ENCODE measurements at regions of chr18 and their contacts with region 1.

Region 1: GRCh38 chr18:24791751-24792560 is 331.5 kb downstream of the HRH4 start:
- DNase-seq: no peak
- ATAC-seq: no peak
- H3K4me3 ChIP-seq: no peak overlapping the region
- H3K27ac ChIP-seq: no peak overlapping the region
- H3K4me1 ChIP-seq: no peaks in the 10 kb centered on the region
- H3K27me3 ChIP-seq: no peaks in the 10 kb centered on the region
- CTCF ChIP-seq: no peak
- POLR2A ChIP-seq: no peak

Region 2: GRCh38 chr18:24462838-24463775 is 328.8 kb before region 1 on chr18:
- in situ Hi-C with region 1: no loop called
- intact Hi-C with region 1: no loop called
- DNase-seq: no peak
- ATAC-seq: no peak
- H3K4me3 ChIP-seq: no peak overlapping the region
- H3K27ac ChIP-seq: no peak overlapping the region
- H3K4me1 ChIP-seq: no peaks in the 10 kb centered on the region
- H3K27me3 ChIP-seq: no peaks in the 10 kb centered on the region
- CTCF ChIP-seq: no peak
- POLR2A ChIP-seq: no peak

Region 3: GRCh38 chr18:24488824-24489493 is 303.0 kb before region 1 on chr18:
- in situ Hi-C with region 1: no loop called
- intact Hi-C with region 1: no loop called
- DNase-seq: no peak
- ATAC-seq: peak in 1 of 2 donors; percentile 36
- H3K4me3 ChIP-seq: no peak overlapping the region
- H3K27ac ChIP-seq: no peak overlapping the region
- H3K4me1 ChIP-seq: no peaks in the 10 kb centered on the region
- H3K27me3 ChIP-seq: no peaks in the 10 kb centered on the region
- CTCF ChIP-seq: peak; percentile 33 to 74 (median 59)
- POLR2A ChIP-seq: no peak

Region 4: GRCh38 chr18:24683965-24684364 is 108.0 kb before region 1 on chr18:
- in situ Hi-C with region 1: loop called in 1 of 4 experiments (anchors 25 kb)
- intact Hi-C with region 1: no loop called
- DNase-seq: no peak
- ATAC-seq: no peak
- H3K4me3 ChIP-seq: no peak overlapping the region
- H3K27ac ChIP-seq: no peak overlapping the region
- H3K4me1 ChIP-seq: no peaks in the 10 kb centered on the region
- H3K27me3 ChIP-seq: no peaks in the 10 kb centered on the region
- CTCF ChIP-seq: no peak
- POLR2A ChIP-seq: no peak

Region 5: DNA sequence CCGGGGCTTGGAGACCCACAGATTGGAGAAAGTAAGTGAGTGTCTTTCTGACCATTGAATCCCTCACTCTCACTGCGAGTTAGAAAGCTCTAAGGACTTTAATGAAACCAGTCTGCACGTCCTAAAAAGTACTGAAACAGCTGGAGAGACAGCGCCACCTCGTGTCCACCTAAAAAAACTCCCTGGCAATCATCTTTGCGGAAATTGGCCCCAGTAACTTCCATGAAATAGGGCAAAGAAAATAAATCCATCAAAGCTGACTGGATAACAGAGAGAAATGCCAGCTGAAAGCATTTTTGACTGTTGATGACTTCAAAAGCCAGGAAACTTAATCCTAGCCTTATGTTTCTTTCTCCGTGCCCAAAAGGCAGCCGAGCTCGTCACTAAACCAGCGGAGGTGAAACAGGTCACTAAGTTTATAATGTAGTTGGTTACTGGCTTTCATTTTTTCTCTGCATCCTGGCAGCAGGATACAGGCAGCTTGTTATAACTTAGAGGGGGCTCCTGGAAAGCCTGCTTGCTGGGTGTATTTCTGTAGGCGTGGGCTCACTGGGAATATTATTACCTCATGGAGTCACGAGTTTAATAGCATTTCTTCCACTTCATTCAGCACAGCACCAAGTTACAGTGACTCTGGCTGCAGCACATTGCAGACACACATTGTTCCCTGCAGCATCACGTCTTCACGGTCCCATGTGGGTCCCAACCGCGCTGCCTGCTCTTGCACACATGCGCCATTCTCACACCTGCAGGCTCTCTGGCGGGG is 65.0 kb before region 1 on chr18:
- in situ Hi-C with region 1: no loop called
- intact Hi-C with region 1: no loop called
- DNase-seq: peak; percentile 30 to 33
- ATAC-seq: peak; percentile 62 to 75
- H3K4me3 ChIP-seq: peak overlapping the region; percentile 36 to 47 (median 41)
- H3K27ac ChIP-seq: no peak overlapping the region
- H3K4me1 ChIP-seq: peaks cover 0 to 5% of the 10 kb centered on the region in 2 donors
- H3K27me3 ChIP-seq: peaks cover 0 to 5% (median 0%) of the 10 kb centered on the region in 3 donors
- CTCF ChIP-seq: peak; percentile 44 to 81 (median 67)
- POLR2A ChIP-seq: no peak

Region 6: DNA sequence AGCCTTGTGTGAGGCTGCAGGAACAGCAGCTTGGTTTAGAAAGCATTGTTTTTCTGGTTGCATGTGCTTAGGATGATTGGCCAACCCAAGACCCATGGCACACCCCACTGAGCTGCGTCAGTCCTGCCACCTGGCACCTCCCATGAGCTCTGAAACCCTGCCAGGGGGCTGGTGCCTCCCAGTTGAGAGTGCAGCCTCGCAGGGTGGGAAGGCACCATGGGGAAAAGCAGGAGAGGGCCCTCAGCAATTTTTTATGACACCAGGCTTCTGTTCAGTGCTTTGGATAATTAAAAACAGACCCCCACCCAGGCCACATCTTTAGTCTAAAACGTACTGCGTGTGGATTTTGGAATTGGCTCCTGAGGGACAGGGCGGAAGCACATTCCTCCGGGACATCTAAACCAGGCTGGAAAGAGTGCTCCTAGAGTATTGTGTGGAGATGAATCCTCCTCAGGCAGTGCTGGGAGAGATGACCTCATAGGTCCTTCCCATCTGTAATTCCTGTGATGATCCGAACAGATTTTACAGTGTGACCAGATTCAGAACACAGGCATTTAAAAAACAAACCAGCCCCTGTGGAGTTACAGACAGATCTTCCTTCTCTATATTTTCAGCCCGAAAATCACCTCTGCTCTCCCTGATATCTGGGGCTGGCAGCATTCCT is 121.7 kb after region 1 on chr18:
- in situ Hi-C with region 1: no loop called
- intact Hi-C with region 1: no loop called
- DNase-seq: no peak
- ATAC-seq: peak; percentile 69 to 76
- H3K4me3 ChIP-seq: no peak overlapping the region
- H3K27ac ChIP-seq: peak overlapping the region in 1 of 4 donors; percentile 1
- H3K4me1 ChIP-seq: no peaks in the 10 kb centered on the region
- H3K27me3 ChIP-seq: no peaks in the 10 kb centered on the region
- CTCF ChIP-seq: no peak
- POLR2A ChIP-seq: no peak